Gastrocnemius medialis (tissue), 4 donors: ENCODE measurements at regions of chr4 and their contacts with region 1.

Region 1: DNA sequence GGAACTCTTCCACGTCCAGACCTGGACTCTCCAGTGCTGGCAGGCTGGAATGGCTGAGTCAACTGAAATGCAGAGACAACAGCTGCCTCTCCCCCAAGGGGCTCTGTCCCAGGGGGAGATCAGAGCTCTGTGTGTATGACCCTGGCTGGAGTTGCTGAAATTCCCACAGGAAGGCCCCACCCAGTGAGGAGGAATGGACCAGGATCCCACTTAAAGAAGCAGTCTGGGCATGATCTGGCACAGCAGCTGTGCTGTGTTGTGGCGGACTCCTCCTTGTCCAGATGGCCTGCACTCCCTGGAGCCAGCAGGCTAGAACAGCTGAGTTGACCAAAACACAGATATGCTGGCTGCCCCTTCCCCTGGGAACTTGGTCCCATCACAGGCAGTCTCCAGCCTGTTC is 25.4 kb downstream of the C4orf17 start:
- DNase-seq: no peak
- ATAC-seq: no peak
- H3K4me3 ChIP-seq: no peak overlapping the region
- H3K27ac ChIP-seq: no peak overlapping the region
- H3K4me1 ChIP-seq: no peaks in the 10 kb centered on the region
- H3K27me3 ChIP-seq: no peaks in the 10 kb centered on the region
- CTCF ChIP-seq: no peak
- POLR2A ChIP-seq: no peak

Region 2: DNA sequence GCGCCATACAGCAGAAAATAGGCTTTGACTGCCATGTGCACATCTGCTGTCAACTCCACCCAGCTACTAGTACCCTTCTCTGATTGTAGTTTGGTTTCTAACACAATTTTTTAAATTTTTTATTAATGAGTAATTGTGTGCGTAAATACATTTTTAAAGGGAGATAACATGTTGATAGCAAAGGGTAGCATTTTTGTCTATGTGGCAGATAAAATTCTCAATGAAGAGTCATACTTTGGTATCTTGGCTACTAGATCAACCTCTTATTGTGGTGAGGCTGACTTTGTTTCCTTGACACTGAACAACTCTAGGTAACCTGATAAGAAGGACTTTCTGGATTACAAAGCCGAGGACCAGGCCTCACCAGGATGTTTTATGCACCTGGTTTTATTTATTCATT is 401.7 kb before region 1 on chr4:
- in situ Hi-C with region 1: loop called in 1 of 4 experiments (anchors 10 kb)
- intact Hi-C with region 1: no loop called
- DNase-seq: no peak
- ATAC-seq: no peak
- H3K4me3 ChIP-seq: no peak overlapping the region
- H3K27ac ChIP-seq: no peak overlapping the region
- H3K4me1 ChIP-seq: no peaks in the 10 kb centered on the region
- H3K27me3 ChIP-seq: no peaks in the 10 kb centered on the region
- CTCF ChIP-seq: no peak
- POLR2A ChIP-seq: no peak